Activated B cell treated with CpG ODN at 0.5 μM for 24 hours (primary cell): ENCODE measurements at regions of chr12 and their contacts with region 1.

Region 1: DNA sequence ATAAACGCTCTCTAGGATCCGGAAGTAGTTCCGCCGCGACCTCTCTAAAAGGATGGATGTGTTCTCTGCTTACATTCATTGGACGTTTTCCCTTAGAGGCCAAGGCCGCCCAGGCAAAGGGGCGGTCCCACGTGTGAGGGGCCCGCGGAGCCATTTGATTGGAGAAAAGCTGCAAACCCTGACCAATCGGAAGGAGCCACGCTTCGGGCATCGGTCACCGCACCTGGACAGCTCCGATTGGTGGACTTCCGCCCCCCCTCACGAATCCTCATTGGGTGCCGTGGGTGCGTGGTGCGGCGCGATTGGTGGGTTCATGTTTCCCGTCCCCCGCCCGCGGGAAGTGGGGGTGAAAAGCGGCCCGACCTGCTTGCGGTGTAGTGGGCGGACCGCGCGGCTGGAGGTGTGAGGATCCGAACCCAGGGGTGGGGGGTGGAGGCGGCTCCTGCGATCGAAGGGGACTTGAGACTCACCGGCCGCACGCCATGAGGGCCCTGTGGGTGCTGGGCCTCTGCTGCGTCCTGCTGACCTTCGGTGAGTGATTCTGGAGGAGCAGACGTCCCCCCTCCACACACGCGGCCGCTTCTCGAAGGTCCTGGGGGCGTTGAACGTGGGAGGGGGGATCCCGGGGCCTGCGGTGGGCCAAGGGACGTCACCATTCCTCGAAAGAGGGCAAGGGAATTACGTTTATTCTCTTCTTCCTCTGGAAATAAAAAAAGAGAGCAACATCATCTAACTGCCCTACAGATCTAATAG is at the start of gene HSP90B1:
- DNase-seq: peak; percentile 95
- ATAC-seq: peak; percentile 69
- H3K4me3 Mint-ChIP-seq: peak within 1 kb of the TSS; percentile 89
- H3K27ac Mint-ChIP-seq: peak within 1 kb of the TSS; percentile 97
- H3K4me1 Mint-ChIP-seq: peaks cover 68% of the 10 kb centered on the region
- H3K27me3 Mint-ChIP-seq: no peaks in the 10 kb centered on the region
- CTCF ChIP-seq: no peak
- total RNA-seq, gene HSP90B1: 346 and 368 TPM in 2 replicates

Region 2: GRCh38 chr12:101931498-101932326 is 1998.5 kb before region 1 on chr12:
- CTCF ChIA-PET with region 1: no interaction called
- POLR2A ChIA-PET with region 1: no interaction called
- intact Hi-C with region 1: loop called (anchors 2 kb)
- DNase-seq: no peak
- ATAC-seq: peak; percentile 63
- H3K4me3 Mint-ChIP-seq: peak overlapping the region; percentile 33
- H3K27ac Mint-ChIP-seq: peak overlapping the region; percentile 82
- H3K4me1 Mint-ChIP-seq: peaks cover 87% of the 10 kb centered on the region
- H3K27me3 Mint-ChIP-seq: no peaks in the 10 kb centered on the region
- CTCF ChIP-seq: no peak

Region 3: GRCh38 chr12:103178366-103179080 is 751.7 kb before region 1 on chr12:
- CTCF ChIA-PET with region 1: no interaction called
- POLR2A ChIA-PET with region 1: no interaction called
- intact Hi-C with region 1: no loop called
- DNase-seq: no peak
- ATAC-seq: no peak
- H3K4me3 Mint-ChIP-seq: no peak overlapping the region
- H3K27ac Mint-ChIP-seq: no peak overlapping the region
- H3K4me1 Mint-ChIP-seq: peaks cover 10% of the 10 kb centered on the region
- H3K27me3 Mint-ChIP-seq: no peaks in the 10 kb centered on the region
- CTCF ChIP-seq: no peak

Region 4: GRCh38 chr12:103279444-103279843 is 650.8 kb before region 1 on chr12:
- CTCF ChIA-PET with region 1: no interaction called
- POLR2A ChIA-PET with region 1: no interaction called
- intact Hi-C with region 1: no loop called
- DNase-seq: no peak
- ATAC-seq: no peak
- H3K4me3 Mint-ChIP-seq: no peak overlapping the region
- H3K27ac Mint-ChIP-seq: no peak overlapping the region
- H3K4me1 Mint-ChIP-seq: peaks cover 5% of the 10 kb centered on the region
- H3K27me3 Mint-ChIP-seq: no peaks in the 10 kb centered on the region
- CTCF ChIP-seq: no peak

Region 5: DNA sequence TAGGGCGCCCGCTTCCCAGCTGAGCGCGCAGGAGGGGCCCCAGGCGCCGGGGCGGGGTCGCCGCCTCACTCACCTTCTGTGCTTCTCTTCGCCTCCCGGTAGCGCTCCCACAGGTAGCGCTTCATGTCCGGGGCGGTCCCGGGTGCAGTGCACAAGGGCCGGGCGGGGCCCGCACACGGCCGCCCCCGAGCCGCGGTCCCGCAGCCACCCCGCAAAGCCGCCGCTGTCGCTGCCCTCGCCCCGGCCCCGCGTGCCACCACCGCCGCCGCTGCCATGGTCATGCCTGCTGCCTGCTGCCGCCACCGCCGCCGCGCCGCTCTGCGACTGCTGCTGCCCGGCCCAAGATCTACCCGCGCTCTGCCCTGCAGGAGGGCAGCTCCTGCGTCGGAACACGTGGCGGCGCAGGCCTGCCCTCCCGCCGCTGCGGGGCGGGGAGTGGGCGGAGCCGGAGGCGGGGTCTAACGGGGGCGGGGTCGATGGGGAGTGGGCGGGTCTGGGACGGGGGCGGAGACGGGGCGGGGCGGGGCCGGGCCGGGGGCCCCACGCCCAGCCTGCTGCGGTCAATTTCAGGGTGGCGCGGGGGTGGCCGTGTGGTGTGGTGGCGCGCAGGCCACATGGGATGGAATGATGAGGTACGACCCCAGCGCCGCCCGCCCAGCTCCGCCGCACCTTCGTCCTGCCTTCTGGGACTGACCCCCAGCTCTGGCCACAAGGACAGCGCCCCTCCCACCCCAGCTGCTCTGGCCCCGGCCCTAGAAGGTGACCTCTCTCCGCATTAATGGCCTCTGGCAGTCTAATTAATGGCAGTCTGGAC is 89.1 kb before region 1 on chr12 and contains the start of gene NT5DC3:
- CTCF ChIA-PET with region 1: no interaction called
- POLR2A ChIA-PET with region 1: interaction called, 36 read pairs
- intact Hi-C with region 1: loop called (anchors 1 kb)
- DNase-seq: peak; percentile 83
- ATAC-seq: peak; percentile 91
- H3K4me3 Mint-ChIP-seq: peak within 1 kb of the TSS; percentile 89
- H3K27ac Mint-ChIP-seq: peak within 1 kb of the TSS; percentile 84
- H3K4me1 Mint-ChIP-seq: peaks cover 32% of the 10 kb centered on the region
- H3K27me3 Mint-ChIP-seq: no peaks in the 10 kb centered on the region
- CTCF ChIP-seq: no peak
- total RNA-seq, gene NT5DC3: 11.6 and 12.4 TPM in 2 replicates

Region 6: GRCh38 chr12:103947871-103948555 is 17.8 kb after region 1 on chr12:
- CTCF ChIA-PET with region 1: no interaction called
- POLR2A ChIA-PET with region 1: interaction called, 19 read pairs
- intact Hi-C with region 1: loop called (anchors 1 kb)
- DNase-seq: no peak
- ATAC-seq: no peak
- H3K4me3 Mint-ChIP-seq: no peak overlapping the region
- H3K27ac Mint-ChIP-seq: no peak overlapping the region
- H3K4me1 Mint-ChIP-seq: no peaks in the 10 kb centered on the region
- H3K27me3 Mint-ChIP-seq: no peaks in the 10 kb centered on the region
- CTCF ChIP-seq: no peak

Region 7: DNA sequence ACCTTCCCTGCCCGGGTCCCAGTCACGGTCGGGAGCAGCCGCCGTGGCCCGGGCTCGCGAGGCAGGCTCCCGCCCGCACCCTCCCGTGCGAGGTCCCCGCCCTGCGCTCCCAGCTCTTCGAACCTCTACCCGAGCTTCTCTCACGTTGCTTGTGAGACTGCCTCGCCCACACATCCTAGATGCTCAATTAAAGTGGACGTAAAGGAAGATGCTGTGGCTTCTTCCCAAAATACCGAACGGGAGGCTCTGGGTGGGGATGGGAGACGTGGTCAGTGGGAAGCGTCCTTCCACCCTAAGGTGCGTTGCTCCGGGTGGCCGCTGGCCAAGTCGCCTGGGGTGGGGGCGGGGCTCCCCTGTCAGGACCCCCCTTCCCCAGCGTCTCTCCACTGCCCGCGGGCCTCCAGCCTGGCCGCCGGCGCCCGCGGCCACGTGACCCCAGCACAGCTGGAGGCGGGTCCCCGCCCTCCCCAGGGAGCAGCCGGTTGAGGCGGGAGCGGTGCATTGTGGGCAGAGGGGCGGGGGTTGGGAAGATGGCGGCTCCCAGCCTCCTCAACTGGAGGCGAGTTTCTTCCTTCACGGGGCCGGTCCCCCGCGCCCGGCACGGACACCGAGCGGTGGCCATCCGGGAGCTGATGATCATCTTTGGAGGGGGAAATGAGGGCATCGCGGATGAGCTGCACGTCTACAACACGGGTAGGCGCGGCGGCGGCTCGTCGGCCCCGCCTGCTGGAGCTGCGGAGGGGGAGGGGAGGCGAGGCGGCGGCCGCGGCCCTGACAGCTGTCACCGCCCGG is 134.0 kb after region 1 on chr12 and contains the start of gene HCFC2:
- CTCF ChIA-PET with region 1: no interaction called
- POLR2A ChIA-PET with region 1: interaction called, 6 read pairs
- intact Hi-C with region 1: loop called (anchors 2 kb)
- DNase-seq: peak; percentile 94
- ATAC-seq: peak; percentile 95
- H3K4me3 Mint-ChIP-seq: peak within 1 kb of the TSS; percentile 97
- H3K27ac Mint-ChIP-seq: peak within 1 kb of the TSS; percentile 89
- H3K4me1 Mint-ChIP-seq: peaks cover 13% of the 10 kb centered on the region
- H3K27me3 Mint-ChIP-seq: peaks cover 9% of the 10 kb centered on the region
- CTCF ChIP-seq: no peak
- total RNA-seq, gene HCFC2: 7.4 and 11.2 TPM in 2 replicates

Region 8: DNA sequence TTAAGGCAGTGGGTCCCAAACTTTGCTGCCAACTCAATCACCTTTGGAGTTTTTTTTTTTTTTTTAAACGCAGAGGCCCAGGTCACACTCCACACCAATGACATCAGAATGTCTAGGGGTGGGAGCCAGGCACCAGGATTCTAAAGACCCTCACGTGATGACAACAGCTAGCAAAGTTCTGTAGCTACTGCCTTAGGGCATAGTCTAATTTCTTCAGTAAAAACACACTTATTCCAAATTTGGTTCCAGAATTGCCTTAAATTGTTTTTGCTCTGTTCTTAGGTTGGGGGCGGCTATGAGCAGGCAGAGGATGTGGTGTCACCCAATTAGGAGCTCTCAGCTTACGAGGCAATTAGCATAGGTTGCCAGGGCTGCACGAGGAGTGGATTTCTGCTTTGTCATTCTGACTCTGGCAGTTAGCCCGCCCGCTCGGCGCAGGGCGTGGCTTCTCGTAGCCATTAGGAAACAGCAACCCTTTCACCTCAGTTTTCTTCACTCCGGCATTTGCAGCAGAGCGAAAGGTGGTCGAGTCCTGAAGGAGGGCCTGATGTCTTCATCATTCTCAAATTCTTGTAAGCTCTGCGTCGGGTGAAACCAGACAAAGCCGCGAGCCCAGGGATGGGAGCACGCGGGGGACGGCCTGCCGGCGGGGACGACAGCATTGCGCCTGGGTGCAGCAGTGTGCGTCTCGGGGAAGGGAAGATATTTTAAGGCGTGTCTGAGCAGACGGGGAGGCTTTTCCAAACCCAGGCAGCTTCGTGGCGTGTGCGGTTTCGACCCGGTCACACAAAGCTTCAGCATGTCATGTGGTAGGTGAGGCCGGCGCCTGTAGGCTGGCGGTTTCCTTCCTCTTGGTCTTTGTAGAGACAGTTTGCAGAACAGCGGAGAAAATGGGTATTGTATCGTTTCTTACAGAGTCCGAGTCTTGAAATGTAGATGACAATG is 356.6 kb after region 1 on chr12:
- CTCF ChIA-PET with region 1: no interaction called
- POLR2A ChIA-PET with region 1: interaction called, 19 read pairs
- intact Hi-C with region 1: no loop called
- DNase-seq: peak; percentile 76
- ATAC-seq: peak; percentile 86
- H3K4me3 Mint-ChIP-seq: peak overlapping the region; percentile 100
- H3K27ac Mint-ChIP-seq: peak overlapping the region; percentile 99
- H3K4me1 Mint-ChIP-seq: peaks cover 40% of the 10 kb centered on the region
- H3K27me3 Mint-ChIP-seq: peaks cover 2% of the 10 kb centered on the region
- CTCF ChIP-seq: no peak